Activated CD4-positive, alpha-beta memory T cell treated with anti-CD3 and anti-CD28 coated beads for 36 hours (primary cell): ENCODE measurements at regions of chr22 and their contacts with region 1.

Region 1: DNA sequence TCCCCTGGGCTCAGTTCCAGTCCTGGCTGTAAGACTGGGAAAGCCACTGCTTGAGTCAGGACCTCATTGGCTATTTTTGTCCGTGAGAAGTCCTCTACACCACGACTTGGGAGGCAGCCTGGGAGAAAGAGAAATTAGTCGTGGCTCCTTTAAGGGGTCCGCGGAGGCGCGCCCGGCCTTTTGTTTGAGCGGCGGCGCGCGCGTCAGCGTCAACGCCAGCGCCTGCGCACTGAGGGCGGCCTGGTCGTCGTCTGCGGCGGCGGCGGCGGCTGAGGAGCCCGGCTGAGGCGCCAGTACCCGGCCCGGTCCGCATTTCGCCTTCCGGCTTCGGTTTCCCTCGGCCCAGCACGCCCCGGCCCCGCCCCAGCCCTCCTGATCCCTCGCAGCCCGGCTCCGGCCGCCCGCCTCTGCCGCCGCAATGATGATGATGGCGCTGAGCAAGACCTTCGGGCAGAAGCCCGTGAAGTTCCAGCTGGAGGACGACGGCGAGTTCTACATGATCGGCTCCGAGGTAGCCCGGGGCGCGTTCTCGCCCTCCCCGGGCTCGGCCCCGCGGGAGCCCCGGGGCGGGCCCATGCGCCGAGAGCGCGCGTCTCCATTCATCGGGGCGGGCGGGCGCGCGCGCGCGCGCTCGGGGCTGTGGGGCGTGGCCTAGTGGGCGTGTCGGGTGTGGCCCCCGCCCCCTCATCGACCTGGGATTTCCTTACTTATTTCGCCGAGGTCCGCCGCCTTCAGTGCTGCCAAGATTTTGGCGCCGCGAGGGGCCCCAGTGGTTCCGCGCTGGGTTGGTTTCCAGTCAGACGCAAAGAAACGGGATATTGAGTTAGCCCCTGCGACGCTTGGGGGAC is at the start of gene SMARCB1:
- DNase-seq: peak; percentile 93
- H3K4me3 Mint-ChIP-seq: peak within 1 kb of the TSS; percentile 86
- H3K27ac Mint-ChIP-seq: peak within 1 kb of the TSS; percentile 94
- H3K4me1 Mint-ChIP-seq: peaks cover 25% of the 10 kb centered on the region
- H3K27me3 Mint-ChIP-seq: no peaks in the 10 kb centered on the region
- total RNA-seq, gene SMARCB1: 71.3 to 72.5 TPM

Region 2: DNA sequence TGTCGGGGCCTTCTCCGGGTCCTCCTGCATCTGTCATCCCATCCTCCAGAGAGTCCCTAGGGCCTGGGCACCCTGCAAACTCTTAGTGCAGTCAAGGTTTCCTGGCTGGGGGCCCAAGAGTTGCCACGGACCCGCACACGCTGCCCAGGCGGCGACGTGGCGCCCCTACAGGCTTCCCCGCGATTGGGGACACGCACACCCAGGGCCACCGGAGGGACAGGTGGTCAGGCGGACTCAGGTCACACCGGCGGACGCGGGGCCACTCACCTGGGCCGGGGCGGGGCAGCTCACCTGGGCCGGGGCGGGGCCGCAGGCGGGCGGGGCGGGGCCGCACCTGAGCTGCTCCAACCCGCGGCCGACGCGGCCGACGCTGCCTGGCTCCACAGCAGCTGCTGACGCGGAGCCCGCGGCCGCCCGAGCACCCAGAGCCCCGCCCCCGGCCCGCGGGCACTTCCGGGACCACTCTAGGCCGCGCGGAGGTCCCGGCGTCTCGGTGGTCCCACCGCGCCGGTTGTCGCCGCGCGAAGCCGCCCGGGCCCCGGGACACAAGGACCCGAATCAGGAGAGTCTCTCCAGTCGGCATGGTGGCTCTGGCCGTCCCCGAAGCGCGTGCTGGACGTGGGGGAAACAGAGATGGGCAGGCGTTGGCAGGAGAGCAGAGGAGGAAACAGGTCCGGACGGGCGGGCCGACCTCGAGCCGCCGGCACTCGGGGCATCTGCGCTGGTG is 36.1 kb before region 1 on chr22 and contains the start of gene ZNF70:
- CTCF ChIA-PET with region 1: no interaction called
- POLR2A ChIA-PET with region 1: interaction called, 3 read pairs
- intact Hi-C with region 1: loop called (anchors 1 kb)
- DNase-seq: peak; percentile 85
- H3K4me3 Mint-ChIP-seq: peak within 1 kb of the TSS; percentile 72
- H3K27ac Mint-ChIP-seq: peak within 1 kb of the TSS; percentile 8
- H3K4me1 Mint-ChIP-seq: peaks cover 12% of the 10 kb centered on the region
- H3K27me3 Mint-ChIP-seq: no peaks in the 10 kb centered on the region
- total RNA-seq, gene ZNF70: 1.2 to 1.3 TPM

Region 3: GRCh38 chr22:23767673-23768548 is 19.1 kb before region 1 on chr22 and contains the start of gene CHCHD10:
- CTCF ChIA-PET with region 1: interaction called, 3 read pairs
- POLR2A ChIA-PET with region 1: interaction called, 6 read pairs
- intact Hi-C with region 1: loop called (anchors 2 kb)
- DNase-seq: peak; percentile 84
- H3K4me3 Mint-ChIP-seq: peak within 1 kb of the TSS; percentile 76
- H3K27ac Mint-ChIP-seq: peak within 1 kb of the TSS; percentile 42
- H3K4me1 Mint-ChIP-seq: peaks cover 40% of the 10 kb centered on the region
- H3K27me3 Mint-ChIP-seq: no peaks in the 10 kb centered on the region
- total RNA-seq, gene CHCHD10: 144 to 157 TPM

Region 4: GRCh38 chr22:23838681-23839468 is 51.9 kb after region 1 on chr22 and contains the start of gene DERL3:
- CTCF ChIA-PET with region 1: no interaction called
- POLR2A ChIA-PET with region 1: interaction called, 4 read pairs
- intact Hi-C with region 1: loop called (anchors 1 kb)
- DNase-seq: peak; percentile 98
- H3K4me3 Mint-ChIP-seq: peak within 1 kb of the TSS; percentile 88
- H3K27ac Mint-ChIP-seq: peak within 1 kb of the TSS; percentile 70
- H3K4me1 Mint-ChIP-seq: peaks cover 19% of the 10 kb centered on the region
- H3K27me3 Mint-ChIP-seq: peaks cover 2% of the 10 kb centered on the region
- total RNA-seq, gene DERL3: 8.1 to 9.7 TPM

Region 5: DNA sequence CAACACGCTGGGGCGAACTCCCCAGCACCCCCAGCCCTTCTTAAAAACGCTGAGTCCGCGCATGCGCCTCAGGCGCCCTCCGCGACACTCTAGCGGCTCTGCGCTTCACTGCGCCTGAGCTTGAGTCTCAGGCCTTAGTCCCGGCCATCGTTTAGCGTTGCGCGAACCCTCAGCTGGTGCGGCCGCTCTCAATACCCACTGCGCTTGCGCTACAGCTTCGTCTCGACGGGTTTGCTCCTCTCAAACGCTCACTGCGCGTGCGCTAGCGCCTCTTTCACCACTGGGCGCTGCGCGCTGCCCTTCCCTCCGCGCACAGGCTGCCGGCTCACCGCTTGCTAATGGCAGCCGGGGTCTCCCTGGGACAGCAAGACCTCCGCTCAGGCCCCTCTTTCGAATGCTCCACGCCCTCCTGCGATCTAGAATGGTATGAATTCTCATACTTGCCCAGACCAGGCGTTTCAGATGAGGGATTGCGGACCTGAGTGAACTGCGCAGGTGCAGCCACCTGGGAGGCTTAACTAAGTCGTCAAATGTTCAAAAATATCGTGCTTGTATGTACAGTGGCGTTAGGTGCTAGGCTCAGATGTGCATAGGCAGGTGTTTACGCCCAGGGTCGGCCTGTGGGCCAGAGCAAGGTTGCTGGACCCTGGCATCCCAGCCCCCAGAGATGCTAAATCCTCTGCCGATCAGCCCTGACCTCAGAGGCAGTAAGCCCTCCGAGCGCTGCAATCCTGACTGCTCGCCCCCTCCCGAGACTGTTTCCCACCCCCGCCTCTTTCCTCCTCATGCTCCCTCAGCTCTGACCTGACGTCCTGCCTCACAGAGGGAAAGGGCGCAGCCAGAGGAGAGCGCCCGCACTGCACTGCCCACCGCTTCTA is 70.9 kb after region 1 on chr22 and contains the start of gene SLC2A11:
- CTCF ChIA-PET with region 1: no interaction called
- POLR2A ChIA-PET with region 1: no interaction called
- intact Hi-C with region 1: loop called (anchors 5 kb)
- DNase-seq: peak; percentile 96
- H3K4me3 Mint-ChIP-seq: peak within 1 kb of the TSS; percentile 89
- H3K27ac Mint-ChIP-seq: peak within 1 kb of the TSS; percentile 78
- H3K4me1 Mint-ChIP-seq: peaks cover 17% of the 10 kb centered on the region
- H3K27me3 Mint-ChIP-seq: no peaks in the 10 kb centered on the region
- total RNA-seq, gene SLC2A11: 6.8 to 8.9 TPM

Region 6: DNA sequence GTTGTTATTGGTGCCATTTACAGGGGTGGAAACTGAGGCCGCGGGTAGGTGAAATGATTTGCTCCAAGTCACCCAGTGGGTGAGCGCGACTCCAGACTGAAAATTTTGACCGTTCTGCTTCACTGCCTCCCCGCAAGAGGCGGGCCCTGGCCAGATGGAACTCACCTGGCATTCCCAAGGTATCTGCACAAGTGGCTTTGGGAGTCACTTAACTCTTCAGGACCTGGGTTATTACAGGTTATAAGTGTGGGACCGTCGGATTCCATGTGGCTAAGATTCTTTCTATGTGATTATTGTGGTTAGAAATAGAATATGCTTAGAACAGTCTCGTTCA is 224.7 kb after region 1 on chr22:
- CTCF ChIA-PET with region 1: no interaction called
- POLR2A ChIA-PET with region 1: interaction called, 4 read pairs
- intact Hi-C with region 1: loop called (anchors 1 kb)
- DNase-seq: no peak
- H3K4me3 Mint-ChIP-seq: peak overlapping the region; percentile 92
- H3K27ac Mint-ChIP-seq: peak overlapping the region; percentile 92
- H3K4me1 Mint-ChIP-seq: peaks cover 24% of the 10 kb centered on the region
- H3K27me3 Mint-ChIP-seq: no peaks in the 10 kb centered on the region